Dendritic cell treated with granulocyte-macrophage colony-stimulating factor and Interleukin-4, amounts not matched to agents 40 ng/mL and 50 ng/mL, for 4 days (primary cell): ENCODE measurements at regions of chr9 and their contacts with region 1.

Region 1: GRCh38 chr9:95510709-95511615 is 5.8 kb downstream of the PTCH1 start:
- H3K4me3 Mint-ChIP-seq: peak overlapping the region; percentile 94
- H3K27ac Mint-ChIP-seq: no peak overlapping the region
- H3K4me1 Mint-ChIP-seq: peaks cover 57% of the 10 kb centered on the region
- H3K27me3 Mint-ChIP-seq: peaks cover 92% of the 10 kb centered on the region

Region 2: GRCh38 chr9:95327239-95327865 is 183.6 kb before region 1 on chr9:
- intact Hi-C with region 1: loop called (anchors 10 kb)
- H3K4me3 Mint-ChIP-seq: no peak overlapping the region
- H3K27ac Mint-ChIP-seq: no peak overlapping the region
- H3K4me1 Mint-ChIP-seq: no peaks in the 10 kb centered on the region
- H3K27me3 Mint-ChIP-seq: peaks cover 16% of the 10 kb centered on the region